ENCODE measurements at regions of chr7 and their contacts with region 1.

Region 1: GRCh38 chr7:137898839-137899721 is 52.3 kb upstream of the DGKI start:
- DNase-seq: peak; percentile 85
- H3K4me3 ChIP-seq: no peak overlapping the region
- H3K27ac ChIP-seq: no peak overlapping the region
- H3K4me1 ChIP-seq: no peaks in the 10 kb centered on the region
- H3K27me3 ChIP-seq: no peaks in the 10 kb centered on the region
- CTCF ChIP-seq: peak; percentile 96

Region 2: GRCh38 chr7:137656227-137656849 is 242.7 kb before region 1 on chr7:
- intact Hi-C with region 1: loop called (anchors 1 kb)
- DNase-seq: peak; percentile 81
- H3K4me3 ChIP-seq: no peak overlapping the region
- H3K27ac ChIP-seq: no peak overlapping the region
- H3K4me1 ChIP-seq: no peaks in the 10 kb centered on the region
- H3K27me3 ChIP-seq: no peaks in the 10 kb centered on the region
- CTCF ChIP-seq: peak; percentile 81

Region 3: GRCh38 chr7:138008547-138009349 is 109.7 kb after region 1 on chr7:
- intact Hi-C with region 1: loop called (anchors 2 kb)
- DNase-seq: peak; percentile 38
- H3K4me3 ChIP-seq: no peak overlapping the region
- H3K27ac ChIP-seq: no peak overlapping the region
- H3K4me1 ChIP-seq: no peaks in the 10 kb centered on the region
- H3K27me3 ChIP-seq: no peaks in the 10 kb centered on the region
- CTCF ChIP-seq: peak; percentile 83

Region 4: GRCh38 chr7:138738551-138739335 is 839.7 kb after region 1 on chr7:
- intact Hi-C with region 1: loop called (anchors 10 kb)
- DNase-seq: peak; percentile 88
- H3K4me3 ChIP-seq: no peak overlapping the region
- H3K27ac ChIP-seq: no peak overlapping the region
- H3K4me1 ChIP-seq: no peaks in the 10 kb centered on the region
- H3K27me3 ChIP-seq: no peaks in the 10 kb centered on the region
- CTCF ChIP-seq: peak; percentile 79